T-cell (primary cell): ENCODE measurements at regions of chr16 and their contacts with region 1.

Region 1: GRCh38 chr16:47141773-47142485 is 1.8 kb downstream of the NETO2 start:
- DNase-seq: peak; percentile 64 to 87 (median 76)
- ATAC-seq: peak; percentile 66 to 78 (median 67)
- H3K4me3 ChIP-seq: peak overlapping the region; percentile 38 to 85
- H3K4me3 Mint-ChIP-seq: peak overlapping the region; percentile 71 to 84 (median 83)
- H3K27ac ChIP-seq: no peak overlapping the region
- H3K27ac Mint-ChIP-seq: peak overlapping the region in 1 of 2 donors; percentile 53
- H3K4me1 ChIP-seq: peaks cover 8 to 18% of the 10 kb centered on the region in 2 experiments
- H3K4me1 Mint-ChIP-seq: peaks cover 15 to 22% (median 19%) of the 10 kb centered on the region in 3 donors
- H3K27me3 ChIP-seq: peaks cover 3 to 12% of the 10 kb centered on the region in 2 experiments
- H3K27me3 Mint-ChIP-seq: peaks cover 19 to 22% of the 10 kb centered on the region in 2 donors

Region 2: GRCh38 chr16:47037746-47038458 is 104.0 kb before region 1 on chr16:
- CTCF ChIA-PET with region 1: interaction called in 1 of 2 experiments, 11 read pairs
- POLR2A ChIA-PET with region 1: interaction called in 1 of 2 experiments, 4 read pairs
- DNase-seq: peak; percentile 63 to 92 (median 84)
- ATAC-seq: peak; percentile 97
- H3K4me3 ChIP-seq: peak overlapping the region; percentile 59 to 71
- H3K4me3 Mint-ChIP-seq: peak overlapping the region; percentile 70 to 75 (median 73)
- H3K27ac ChIP-seq: no peak overlapping the region
- H3K27ac Mint-ChIP-seq: no peak overlapping the region
- H3K4me1 ChIP-seq: peaks cover 0 to 13% of the 10 kb centered on the region in 2 experiments
- H3K4me1 Mint-ChIP-seq: peaks cover 0 to 5% (median 4%) of the 10 kb centered on the region in 3 donors
- H3K27me3 ChIP-seq: peaks cover 2 to 26% of the 10 kb centered on the region in 2 experiments
- H3K27me3 Mint-ChIP-seq: peaks cover 2 to 4% of the 10 kb centered on the region in 2 donors

Region 3: DNA sequence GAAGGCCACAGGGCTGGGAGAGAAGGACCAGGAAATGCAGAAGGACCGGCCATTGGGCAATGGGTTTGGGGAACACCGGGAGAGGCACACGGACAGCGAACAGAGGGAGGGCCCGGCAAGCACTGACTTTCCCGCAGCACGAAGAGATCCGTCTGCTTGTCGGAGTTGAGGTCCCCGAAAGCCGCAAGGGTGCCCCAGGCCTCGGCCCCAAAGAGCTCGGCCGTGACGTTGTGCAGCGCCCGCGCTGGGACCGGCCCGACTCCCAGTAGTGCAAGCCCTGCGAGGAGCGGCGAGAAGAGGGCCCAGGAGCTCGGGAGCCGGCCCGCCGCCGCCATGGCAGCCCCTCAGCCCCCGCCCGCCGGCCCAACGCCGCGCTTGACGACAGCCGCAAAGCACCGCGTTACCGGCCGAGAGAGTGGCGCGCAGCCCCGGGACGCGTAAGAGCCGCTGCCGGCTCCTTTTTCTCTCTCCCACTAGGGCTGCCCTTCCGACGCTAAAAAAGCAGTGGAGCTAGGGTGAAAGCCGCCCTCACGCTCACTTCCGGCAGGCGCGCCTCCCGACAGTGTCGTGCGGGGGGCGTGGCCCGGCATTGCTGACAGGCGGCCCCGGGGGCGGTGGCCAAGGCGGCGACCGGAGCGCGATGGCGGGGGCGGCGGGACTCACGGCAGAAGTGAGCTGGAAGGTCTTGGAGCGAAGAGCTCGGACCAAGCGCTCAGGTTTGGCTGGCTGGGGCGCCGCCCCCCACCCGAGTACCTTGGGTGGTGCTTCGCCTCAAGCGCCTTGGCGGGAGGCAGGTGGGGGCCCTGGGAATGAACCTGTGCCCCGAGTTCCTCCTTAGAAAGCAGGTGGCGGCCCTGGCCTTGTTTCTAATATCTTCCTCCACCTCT is 319.0 kb after region 1 on chr16 and contains the starts of genes ITFG1 and PHKB:
- CTCF ChIA-PET with region 1: interaction called, 3 to 10 read pairs
- POLR2A ChIA-PET with region 1: no interaction called
- DNase-seq: peak; percentile 91 to 98 (median 97)
- ATAC-seq: peak; percentile 93 to 96 (median 96)
- H3K4me3 ChIP-seq: peak within 1 kb of the TSS; percentile 73 to 99
- H3K4me3 Mint-ChIP-seq: peak within 1 kb of the TSS; percentile 92 to 98 (median 93)
- H3K27ac ChIP-seq: peak within 1 kb of the TSS; percentile 92
- H3K27ac Mint-ChIP-seq: peak within 1 kb of the TSS; percentile 91 to 97
- H3K4me1 ChIP-seq: peaks cover 19 to 32% of the 10 kb centered on the region in 2 experiments
- H3K4me1 Mint-ChIP-seq: peaks cover 68 to 74% (median 73%) of the 10 kb centered on the region in 3 donors
- H3K27me3 ChIP-seq: no peaks in the 10 kb centered on the region
- H3K27me3 Mint-ChIP-seq: no peaks in the 10 kb centered on the region
- total RNA-seq, gene ITFG1: 17.6 to 33.9 (median 22.6) TPM
- total RNA-seq, gene PHKB: 40.6 to 67.5 (median 48.8) TPM

Region 4: GRCh38 chr16:48164907-48165726 is 1023.2 kb after region 1 on chr16:
- CTCF ChIA-PET with region 1: interaction called, 4 to 18 read pairs
- POLR2A ChIA-PET with region 1: interaction called in 1 of 2 experiments, 5 read pairs
- DNase-seq: peak in 34 of 35 experiments; percentile 16 to 75 (median 46)
- ATAC-seq: peak; percentile 65 to 75 (median 69)
- H3K4me3 ChIP-seq: no peak overlapping the region
- H3K4me3 Mint-ChIP-seq: no peak overlapping the region
- H3K27ac ChIP-seq: no peak overlapping the region
- H3K27ac Mint-ChIP-seq: no peak overlapping the region
- H3K4me1 ChIP-seq: peaks cover 0 to 5% of the 10 kb centered on the region in 2 experiments
- H3K4me1 Mint-ChIP-seq: peaks cover 0 to 4% (median 4%) of the 10 kb centered on the region in 3 donors
- H3K27me3 ChIP-seq: peaks cover 0 to 3% of the 10 kb centered on the region in 2 experiments
- H3K27me3 Mint-ChIP-seq: peaks cover 6 to 8% of the 10 kb centered on the region in 2 donors

Region 5: DNA sequence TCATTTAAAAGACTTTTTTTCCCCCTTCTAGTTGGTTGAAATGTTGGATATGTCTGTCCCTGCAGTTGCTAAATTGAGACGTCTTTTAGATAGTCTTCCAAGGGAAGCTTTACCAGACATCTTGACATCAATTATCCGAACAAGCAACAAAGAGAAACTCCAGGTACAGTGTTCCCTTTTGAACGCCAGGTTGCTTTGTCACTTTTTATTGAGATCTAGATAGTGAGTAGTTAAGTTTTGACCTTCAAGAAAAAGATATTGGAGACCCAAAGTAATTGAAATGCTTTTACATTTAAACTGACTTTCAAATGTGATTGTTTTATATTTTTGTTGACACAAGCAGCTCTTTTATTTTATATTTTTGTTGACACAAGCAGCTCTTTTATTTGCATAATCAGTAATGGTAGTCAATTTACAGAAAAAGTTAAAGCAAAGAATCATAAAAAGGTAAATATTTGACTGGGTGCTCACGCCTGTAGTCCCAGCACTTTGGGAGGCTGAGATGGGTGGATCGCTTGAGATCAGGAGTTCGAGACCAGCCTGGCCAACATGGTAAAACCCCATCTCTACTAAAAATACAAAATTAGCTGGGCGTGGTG is 1114.7 kb after region 1 on chr16:
- CTCF ChIA-PET with region 1: interaction called in 1 of 2 experiments, 10 read pairs
- POLR2A ChIA-PET with region 1: no interaction called
- DNase-seq: no peak
- ATAC-seq: no peak
- H3K4me3 ChIP-seq: no peak overlapping the region
- H3K4me3 Mint-ChIP-seq: no peak overlapping the region
- H3K27ac ChIP-seq: no peak overlapping the region
- H3K27ac Mint-ChIP-seq: no peak overlapping the region
- H3K4me1 ChIP-seq: no peaks in the 10 kb centered on the region
- H3K4me1 Mint-ChIP-seq: peaks cover 11 to 12% (median 12%) of the 10 kb centered on the region in 3 donors
- H3K27me3 ChIP-seq: no peaks in the 10 kb centered on the region
- H3K27me3 Mint-ChIP-seq: no peaks in the 10 kb centered on the region